AG04450 (cell line): ENCODE measurements at regions of chr2 and their contacts with region 1.

Region 1: DNA sequence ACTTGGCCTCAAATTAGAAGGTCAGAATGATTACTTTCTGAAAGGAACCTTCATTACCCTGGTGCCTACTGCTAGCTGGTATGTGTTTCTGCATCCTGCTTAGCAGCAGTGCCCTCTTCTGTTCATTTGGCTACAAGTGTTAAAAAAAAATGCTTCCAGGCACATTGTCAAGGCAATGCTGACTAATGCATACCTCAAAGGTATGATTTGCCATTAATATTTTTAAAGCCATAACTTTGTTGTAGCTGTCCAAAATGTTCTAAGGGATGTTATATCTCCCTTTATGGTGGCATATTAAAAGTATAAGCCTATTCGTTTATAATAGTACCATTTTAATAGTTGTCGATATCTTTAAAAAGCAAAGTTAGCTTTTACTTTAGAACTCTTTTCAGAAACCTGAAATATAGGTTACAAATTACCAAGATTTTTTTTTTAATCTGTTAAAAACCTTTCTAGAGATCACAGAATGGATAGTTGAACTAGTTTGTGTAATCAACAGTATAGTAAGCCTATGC is 52.0 kb upstream of the FAM171B start:
- DNase-seq: peak; percentile 48
- H3K4me3 ChIP-seq: no peak overlapping the region
- H3K27ac ChIP-seq: no peak overlapping the region
- H3K27me3 ChIP-seq: no peaks in the 10 kb centered on the region
- CTCF ChIP-seq: peak; percentile 76

Region 2: DNA sequence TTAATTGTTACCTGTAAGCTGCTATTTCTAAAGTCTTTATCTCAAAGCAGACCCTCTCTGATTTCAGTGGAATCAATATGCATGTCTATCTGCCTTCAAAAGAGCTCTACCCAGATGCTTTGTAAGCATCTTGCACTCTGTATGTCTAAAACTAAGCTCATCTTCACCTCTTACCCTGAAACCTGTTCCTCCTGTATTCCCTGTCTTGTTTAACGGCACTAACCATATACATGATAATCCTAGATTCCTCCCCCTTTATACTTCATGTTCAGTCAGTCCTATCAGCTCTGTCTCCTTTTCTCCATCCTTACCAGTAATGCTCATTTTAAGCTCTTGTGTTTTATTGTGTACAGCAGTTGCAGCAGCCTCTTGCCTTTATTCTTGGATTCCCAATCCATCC is 143.0 kb before region 1 on chr2:
- CTCF ChIA-PET with region 1: interaction called, 158 read pairs
- POLR2A ChIA-PET with region 1: no interaction called
- DNase-seq: no peak
- H3K4me3 ChIP-seq: no peak overlapping the region
- H3K27ac ChIP-seq: no peak overlapping the region
- H3K27me3 ChIP-seq: no peaks in the 10 kb centered on the region
- CTCF ChIP-seq: no peak

Region 3: GRCh38 chr2:186503848-186504606 is 137.8 kb before region 1 on chr2:
- CTCF ChIA-PET with region 1: interaction called, 158 read pairs
- POLR2A ChIA-PET with region 1: no interaction called
- DNase-seq: no peak
- H3K4me3 ChIP-seq: no peak overlapping the region
- H3K27ac ChIP-seq: no peak overlapping the region
- H3K27me3 ChIP-seq: no peaks in the 10 kb centered on the region
- CTCF ChIP-seq: peak; percentile 56

Region 4: DNA sequence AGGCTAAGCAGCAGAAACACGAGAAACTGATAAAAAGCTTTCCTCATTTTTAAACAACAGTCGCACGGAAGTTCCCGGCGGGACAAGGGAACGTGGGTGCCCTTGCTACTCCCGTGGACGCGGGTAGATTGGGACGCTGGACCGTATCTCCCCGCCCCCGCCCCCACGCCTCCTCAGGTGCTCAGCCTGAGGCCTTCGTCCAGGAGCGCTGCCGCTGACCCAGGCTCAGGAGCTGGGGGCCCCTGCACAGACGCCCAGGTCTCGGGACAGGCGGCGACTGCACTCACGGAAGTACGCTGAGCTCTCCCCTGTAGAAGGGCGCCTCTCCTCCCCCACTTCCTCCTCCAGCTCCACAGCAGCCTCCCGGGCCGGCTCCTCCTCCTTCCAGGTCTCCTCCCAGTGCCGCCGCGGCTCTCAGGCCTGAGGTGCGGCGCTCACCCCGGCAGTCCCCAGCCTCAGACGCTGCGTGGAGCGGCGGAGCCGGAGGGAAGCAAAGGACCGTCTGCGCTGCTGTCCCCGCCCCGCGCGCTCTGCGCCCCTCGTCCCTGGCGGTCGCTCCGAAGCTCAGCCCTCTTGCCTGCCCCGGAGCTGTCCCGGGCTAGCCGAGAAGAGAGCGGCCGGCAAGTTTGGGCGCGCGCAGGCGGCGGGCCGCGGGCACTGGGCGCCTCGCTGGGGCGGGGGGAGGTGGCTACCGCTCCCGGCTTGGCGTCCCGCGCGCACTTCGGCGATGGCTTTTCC is 52.1 kb before region 1 on chr2 and contains the start of gene ITGAV:
- CTCF ChIA-PET with region 1: interaction called, 10 read pairs
- POLR2A ChIA-PET with region 1: interaction called, 8 read pairs
- DNase-seq: peak; percentile 62
- H3K4me3 ChIP-seq: peak within 1 kb of the TSS; percentile 90
- H3K27ac ChIP-seq: peak within 1 kb of the TSS; percentile 86
- H3K27me3 ChIP-seq: no peaks in the 10 kb centered on the region
- CTCF ChIP-seq: no peak
- polyA plus RNA-seq, gene ITGAV: 106 and 129 TPM in 2 replicates

Region 5: DNA sequence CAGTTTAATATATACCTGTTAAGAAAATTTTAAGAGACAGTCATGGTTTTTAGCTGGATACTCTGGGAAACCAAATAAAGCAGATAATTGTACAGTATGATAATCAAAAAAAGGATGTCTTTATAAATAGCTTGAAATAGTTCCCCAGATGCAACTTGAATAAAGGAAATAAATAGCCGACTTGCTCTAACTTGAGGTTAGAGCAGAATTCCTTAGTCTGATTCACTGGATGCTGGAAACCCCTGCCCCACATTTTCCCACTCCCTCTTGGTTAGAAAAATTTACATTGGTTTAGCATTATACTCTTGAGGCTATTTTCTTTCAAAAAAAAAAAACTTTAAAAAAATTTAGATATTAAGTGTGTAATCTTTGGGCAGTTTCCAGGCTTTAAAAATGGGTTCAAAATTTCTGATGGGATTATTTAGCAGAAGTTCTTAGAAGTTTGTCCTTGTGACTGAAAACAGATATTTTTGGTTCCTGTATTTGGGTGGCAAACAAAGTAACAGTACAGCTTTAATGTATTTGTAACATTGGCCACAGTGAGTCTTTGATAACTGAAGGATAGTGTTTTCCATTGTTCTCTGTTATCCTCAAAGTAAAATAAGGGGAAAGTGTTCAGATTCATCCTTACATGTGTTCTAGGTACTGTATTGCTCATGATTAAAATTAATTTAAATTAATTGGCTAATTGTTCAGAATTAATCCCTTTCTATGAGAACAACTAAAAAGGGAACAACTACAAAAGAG is 12.4 kb before region 1 on chr2:
- CTCF ChIA-PET with region 1: interaction called, 12 read pairs
- POLR2A ChIA-PET with region 1: interaction called, 3 read pairs
- DNase-seq: no peak
- H3K4me3 ChIP-seq: no peak overlapping the region
- H3K27ac ChIP-seq: no peak overlapping the region
- H3K27me3 ChIP-seq: no peaks in the 10 kb centered on the region
- CTCF ChIP-seq: no peak